A673 (cell line): ENCODE measurements at regions of chr1 and their contacts with region 1.

Region 1: DNA sequence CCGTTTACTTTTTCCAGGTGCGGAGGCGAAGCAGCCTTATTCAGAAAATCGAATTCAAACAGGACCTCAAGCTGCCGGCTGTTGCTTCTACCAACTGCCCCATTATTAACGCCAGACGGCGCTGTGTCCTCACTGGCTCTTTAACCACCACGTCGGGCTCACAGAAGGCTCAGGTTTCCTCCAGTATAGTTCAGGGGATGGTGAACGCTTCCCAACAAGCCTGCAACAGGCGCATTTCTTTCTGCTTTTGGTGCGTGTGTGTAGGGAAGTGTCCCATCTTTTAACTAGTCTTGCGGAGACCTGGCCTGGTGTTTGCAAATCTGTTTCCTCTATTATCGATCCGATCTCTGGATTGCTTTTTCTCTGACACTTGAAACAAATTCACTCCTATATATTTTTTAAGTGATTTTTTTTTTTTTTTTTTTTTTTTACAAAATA is 791 bp upstream of the STUM start:
- DNase-seq: peak; percentile 95
- H3K4me3 ChIP-seq: no peak overlapping the region
- H3K27ac ChIP-seq: no peak overlapping the region
- H3K4me1 ChIP-seq: peaks cover 12% of the 10 kb centered on the region
- H3K27me3 ChIP-seq: peaks cover 29% of the 10 kb centered on the region
- CTCF ChIP-seq: peak; percentile 95

Region 2: GRCh38 chr1:226575739-226576378 is 28.1 kb after region 1 on chr1:
- CTCF ChIA-PET with region 1: no interaction called
- POLR2A ChIA-PET with region 1: no interaction called
- intact Hi-C with region 1: no loop called
- DNase-seq: no peak
- H3K4me3 ChIP-seq: no peak overlapping the region
- H3K27ac ChIP-seq: no peak overlapping the region
- H3K4me1 ChIP-seq: no peaks in the 10 kb centered on the region
- H3K27me3 ChIP-seq: no peaks in the 10 kb centered on the region
- CTCF ChIP-seq: no peak

Region 3: DNA sequence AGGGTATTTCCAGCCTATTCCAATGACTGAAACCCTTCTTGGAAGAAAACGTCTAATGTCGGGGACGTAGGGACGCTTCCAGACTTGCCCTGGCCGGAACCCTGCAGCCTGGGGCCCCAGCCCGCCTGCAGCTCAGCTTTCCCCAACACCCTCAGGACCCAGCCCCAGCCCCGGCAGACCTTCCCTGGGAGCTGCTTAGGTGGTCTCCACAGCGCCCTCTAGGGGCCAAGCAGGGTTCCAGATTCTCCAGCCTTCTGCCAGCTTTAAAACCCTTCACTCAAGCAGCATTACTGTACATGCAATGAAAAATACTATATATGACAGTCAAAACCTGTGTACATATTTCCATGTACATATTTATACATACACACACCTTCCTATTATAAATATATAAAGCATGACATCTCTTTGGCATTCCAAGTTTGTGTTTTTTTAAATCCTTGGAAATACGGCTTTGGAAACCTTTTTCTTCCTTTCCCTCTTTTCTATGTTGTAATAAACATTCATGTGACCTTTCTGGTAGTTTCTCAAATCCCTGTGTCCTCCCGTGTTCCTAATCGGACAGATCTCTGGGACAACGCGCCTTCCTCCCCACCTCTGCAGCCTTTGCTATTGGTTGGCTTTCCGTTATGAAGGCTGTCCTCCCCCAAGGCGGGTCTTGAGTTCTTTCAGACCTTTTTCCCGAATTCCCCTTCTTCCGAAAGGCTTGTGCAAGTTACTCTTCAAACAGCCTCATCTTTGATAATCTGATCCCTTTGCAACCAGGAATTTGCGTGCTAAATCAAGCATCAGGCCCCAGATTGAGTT is 61.1 kb after region 1 on chr1:
- CTCF ChIA-PET with region 1: interaction called, 5 read pairs
- POLR2A ChIA-PET with region 1: no interaction called
- intact Hi-C with region 1: loop called (anchors 2 kb)
- DNase-seq: peak; percentile 77
- H3K4me3 ChIP-seq: no peak overlapping the region
- H3K27ac ChIP-seq: no peak overlapping the region
- H3K4me1 ChIP-seq: no peaks in the 10 kb centered on the region
- H3K27me3 ChIP-seq: no peaks in the 10 kb centered on the region
- CTCF ChIP-seq: peak; percentile 92